Activated CD4-positive, alpha-beta T cell treated with anti-CD3 and anti-CD28 coated beads, Interleukin-2, amount 10 ng/mL, durations not matched to agents 24 days and 14 days (primary cell): ENCODE measurements at regions of chr12 and their contacts with region 1.

Region 1: GRCh38 chr12:69497308-69498026 is 27.3 kb downstream of the FRS2 start:
- DNase-seq: peak; percentile 65
- H3K4me3 Mint-ChIP-seq: no peak overlapping the region
- H3K27ac Mint-ChIP-seq: peak overlapping the region; percentile 9
- H3K4me1 Mint-ChIP-seq: peaks cover 14% of the 10 kb centered on the region
- H3K27me3 Mint-ChIP-seq: no peaks in the 10 kb centered on the region

Region 2: GRCh38 chr12:68971351-68971772 is 526.1 kb before region 1 on chr12:
- intact Hi-C with region 1: no loop called
- DNase-seq: no peak
- H3K4me3 Mint-ChIP-seq: no peak overlapping the region
- H3K27ac Mint-ChIP-seq: no peak overlapping the region
- H3K4me1 Mint-ChIP-seq: no peaks in the 10 kb centered on the region
- H3K27me3 Mint-ChIP-seq: no peaks in the 10 kb centered on the region

Region 3: DNA sequence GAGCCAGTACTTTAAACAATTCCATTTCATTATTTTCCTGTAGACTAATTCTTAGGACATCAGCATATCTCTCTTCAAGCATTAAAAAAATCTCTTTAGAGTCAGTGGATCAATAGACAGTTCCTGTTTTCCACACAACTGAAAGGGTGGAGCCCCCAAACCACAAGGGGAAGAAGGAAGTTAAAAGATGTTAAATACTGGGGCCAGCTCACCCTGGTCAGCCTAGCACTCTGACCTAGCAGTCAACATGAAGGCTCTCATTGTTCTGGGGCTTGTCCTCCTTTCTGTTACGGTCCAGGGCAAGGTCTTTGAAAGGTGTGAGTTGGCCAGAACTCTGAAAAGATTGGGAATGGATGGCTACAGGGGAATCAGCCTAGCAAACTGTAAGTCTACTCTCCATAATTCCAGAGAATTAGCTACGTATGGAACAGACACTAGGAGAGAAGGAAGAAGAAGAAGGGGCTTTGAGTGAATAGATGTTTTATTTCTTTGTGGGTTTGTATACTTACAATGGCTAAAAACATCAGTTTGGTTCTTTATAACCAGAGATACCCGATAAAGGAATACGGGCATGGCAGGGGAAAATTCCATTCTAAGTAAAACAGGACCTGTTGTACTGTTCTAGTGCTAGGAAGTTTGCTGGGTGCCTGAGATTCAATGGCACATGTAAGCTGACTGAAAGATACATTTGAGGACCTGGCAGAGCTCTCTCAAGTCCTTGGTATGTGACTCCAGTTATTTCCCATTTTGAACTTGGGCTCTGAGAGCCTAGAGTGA is 149.1 kb before region 1 on chr12 and contains the start of gene LYZ:
- intact Hi-C with region 1: no loop called
- DNase-seq: no peak
- H3K4me3 Mint-ChIP-seq: no peak within 1 kb of the TSS
- H3K27ac Mint-ChIP-seq: no peak within 1 kb of the TSS
- H3K4me1 Mint-ChIP-seq: no peaks in the 10 kb centered on the region
- H3K27me3 Mint-ChIP-seq: peaks cover 12% of the 10 kb centered on the region
- total RNA-seq, gene LYZ: not detected in 2 replicates

Region 4: DNA sequence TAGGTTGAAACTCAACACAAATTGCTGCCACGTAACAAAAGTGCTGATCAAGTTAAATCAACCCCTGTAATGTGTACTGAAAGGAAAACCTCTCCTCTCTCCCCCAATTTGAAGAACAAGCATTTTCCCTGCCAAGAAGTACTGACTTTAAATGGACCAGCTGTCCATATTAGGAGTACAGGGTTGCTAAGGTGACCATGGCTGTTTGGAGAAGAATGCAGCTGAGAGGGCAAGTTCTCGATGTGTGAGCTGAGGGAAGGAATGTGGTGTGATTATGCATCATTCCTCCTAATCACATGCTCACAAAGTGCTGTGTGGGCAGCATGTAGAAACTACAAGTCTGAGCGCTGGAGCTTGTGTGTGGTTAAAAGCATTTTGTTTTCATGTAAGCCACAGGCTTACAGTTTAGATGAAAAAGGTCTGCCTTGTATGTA is 36.9 kb after region 1 on chr12:
- intact Hi-C with region 1: loop called (anchors 5 kb)
- DNase-seq: peak; percentile 78
- H3K4me3 Mint-ChIP-seq: peak overlapping the region; percentile 27
- H3K27ac Mint-ChIP-seq: peak overlapping the region; percentile 76
- H3K4me1 Mint-ChIP-seq: peaks cover 15% of the 10 kb centered on the region
- H3K27me3 Mint-ChIP-seq: no peaks in the 10 kb centered on the region

Region 5: GRCh38 chr12:69566603-69567002 is 69.1 kb after region 1 on chr12:
- intact Hi-C with region 1: no loop called
- DNase-seq: no peak
- H3K4me3 Mint-ChIP-seq: no peak overlapping the region
- H3K27ac Mint-ChIP-seq: no peak overlapping the region
- H3K4me1 Mint-ChIP-seq: peaks cover 9% of the 10 kb centered on the region
- H3K27me3 Mint-ChIP-seq: no peaks in the 10 kb centered on the region